Activated CD4-positive, alpha-beta T cell treated with anti-CD3 and anti-CD28 coated beads for 36 hours (primary cell): ENCODE measurements at regions of chr16 and their contacts with region 1.

Region 1: DNA sequence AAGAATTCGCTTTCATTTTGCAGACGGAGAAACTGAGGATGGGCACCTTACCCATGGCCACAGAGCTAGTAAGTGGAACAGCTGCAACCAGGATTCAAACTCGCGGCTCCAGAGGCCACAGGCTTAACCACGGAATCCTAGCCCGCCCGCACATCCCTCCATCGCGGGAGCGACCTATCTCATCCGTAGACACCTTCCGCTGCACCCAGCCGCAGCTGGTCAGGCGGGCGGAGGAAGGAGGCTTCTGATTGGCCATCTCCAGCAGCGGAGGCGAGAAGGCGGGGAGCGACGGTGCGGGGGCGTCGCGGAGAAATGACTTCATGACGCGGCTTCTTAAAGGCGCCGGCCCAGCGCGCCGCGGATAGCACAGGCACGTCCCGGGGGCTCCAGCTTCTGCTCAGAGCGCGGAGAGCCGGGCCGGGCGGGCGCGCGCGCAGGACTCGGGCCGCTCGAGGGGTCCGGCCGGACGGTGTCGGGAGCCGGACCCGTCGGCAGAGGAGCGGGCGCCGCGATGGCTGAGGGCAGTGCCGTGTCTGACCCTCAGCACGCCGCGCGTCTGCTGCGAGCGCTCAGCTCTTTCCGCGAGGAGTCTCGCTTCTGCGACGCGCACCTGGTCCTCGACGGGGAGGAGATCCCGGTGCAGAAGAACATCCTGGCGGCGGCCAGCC is at the start of gene GAN:
- DNase-seq: peak; percentile 97
- ATAC-seq: peak; percentile 91
- H3K4me3 Mint-ChIP-seq: peak within 1 kb of the TSS; percentile 99
- H3K27ac Mint-ChIP-seq: peak within 1 kb of the TSS; percentile 97
- H3K4me1 Mint-ChIP-seq: peaks cover 66% of the 10 kb centered on the region
- H3K27me3 Mint-ChIP-seq: no peaks in the 10 kb centered on the region
- total RNA-seq, gene GAN: 13.4 to 13.8 TPM

Region 2: GRCh38 chr16:80569440-80570105 is 745.2 kb before region 1 on chr16:
- CTCF ChIA-PET with region 1: no interaction called
- POLR2A ChIA-PET with region 1: no interaction called
- intact Hi-C with region 1: loop called in 1 of 2 experiments (anchors 10 kb)
- DNase-seq: peak; percentile 90
- ATAC-seq: peak; percentile 98
- H3K4me3 Mint-ChIP-seq: peak overlapping the region; percentile 5
- H3K27ac Mint-ChIP-seq: peak overlapping the region; percentile 81
- H3K4me1 Mint-ChIP-seq: peaks cover 38% of the 10 kb centered on the region
- H3K27me3 Mint-ChIP-seq: peaks cover 4% of the 10 kb centered on the region

Region 3: DNA sequence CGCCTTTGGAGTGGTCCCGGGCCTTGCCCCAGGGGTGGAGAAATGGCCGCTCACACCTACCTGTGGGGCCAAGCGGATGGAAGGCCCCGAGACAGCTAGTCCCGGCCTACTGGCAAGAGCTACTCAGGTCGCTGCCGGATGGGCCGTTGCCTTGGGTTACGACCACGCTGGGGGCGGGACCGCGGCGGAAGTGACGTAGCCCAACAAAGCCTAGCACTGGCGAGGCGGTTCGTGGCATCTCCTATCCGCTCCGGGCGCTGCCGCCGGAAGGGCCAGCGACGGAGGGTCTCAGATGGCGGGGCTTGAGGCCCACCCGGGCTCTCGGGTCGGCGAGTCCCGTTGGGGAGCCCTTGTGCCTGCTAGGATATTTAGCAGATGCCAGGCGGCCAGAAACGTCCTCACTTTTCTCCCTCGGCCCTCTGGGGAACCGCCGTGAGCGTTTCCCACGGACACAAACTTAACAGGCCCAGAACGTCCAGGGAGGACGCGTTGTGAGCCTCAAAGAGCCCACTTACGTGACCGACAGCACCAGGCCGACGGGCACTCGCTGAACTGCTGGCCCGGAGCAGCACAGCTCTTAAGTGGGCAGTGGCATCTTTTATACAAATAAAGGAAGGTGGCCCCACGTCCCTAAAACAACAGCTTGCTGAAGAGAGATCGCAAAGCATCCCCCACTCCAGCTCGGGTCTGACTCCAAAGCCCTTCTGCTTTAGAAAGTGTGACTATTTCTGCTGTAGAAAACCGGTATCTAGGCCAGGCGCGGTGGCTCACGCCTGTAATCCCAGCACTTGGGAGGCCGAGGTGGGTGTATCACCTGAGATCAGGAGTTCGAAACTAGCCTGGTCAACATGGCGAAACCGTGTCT is 237.4 kb before region 1 on chr16 and contains the start of gene C16orf46:
- CTCF ChIA-PET with region 1: no interaction called
- POLR2A ChIA-PET with region 1: no interaction called
- intact Hi-C with region 1: loop called (anchors 1 kb)
- DNase-seq: peak; percentile 99
- ATAC-seq: peak; percentile 86
- H3K4me3 Mint-ChIP-seq: no peak within 1 kb of the TSS
- H3K27ac Mint-ChIP-seq: peak within 1 kb of the TSS; percentile 84
- H3K4me1 Mint-ChIP-seq: peaks cover 7% of the 10 kb centered on the region
- H3K27me3 Mint-ChIP-seq: no peaks in the 10 kb centered on the region
- total RNA-seq, gene C16orf46: 0.28 to 0.34 TPM

Region 4: GRCh38 chr16:81174654-81175571 is 139.8 kb before region 1 on chr16:
- CTCF ChIA-PET with region 1: no interaction called
- POLR2A ChIA-PET with region 1: no interaction called
- intact Hi-C with region 1: no loop called
- DNase-seq: no peak
- ATAC-seq: no peak
- H3K4me3 Mint-ChIP-seq: no peak overlapping the region
- H3K27ac Mint-ChIP-seq: no peak overlapping the region
- H3K4me1 Mint-ChIP-seq: no peaks in the 10 kb centered on the region
- H3K27me3 Mint-ChIP-seq: peaks cover 7% of the 10 kb centered on the region

Region 5: GRCh38 chr16:81261049-81261648 is 53.6 kb before region 1 on chr16:
- CTCF ChIA-PET with region 1: interaction called, 5 read pairs
- POLR2A ChIA-PET with region 1: no interaction called
- intact Hi-C with region 1: loop called in 1 of 2 experiments (anchors 1 kb)
- DNase-seq: peak; percentile 55
- ATAC-seq: peak; percentile 65
- H3K4me3 Mint-ChIP-seq: no peak overlapping the region
- H3K27ac Mint-ChIP-seq: no peak overlapping the region
- H3K4me1 Mint-ChIP-seq: no peaks in the 10 kb centered on the region
- H3K27me3 Mint-ChIP-seq: peaks cover 5% of the 10 kb centered on the region

Region 6: DNA sequence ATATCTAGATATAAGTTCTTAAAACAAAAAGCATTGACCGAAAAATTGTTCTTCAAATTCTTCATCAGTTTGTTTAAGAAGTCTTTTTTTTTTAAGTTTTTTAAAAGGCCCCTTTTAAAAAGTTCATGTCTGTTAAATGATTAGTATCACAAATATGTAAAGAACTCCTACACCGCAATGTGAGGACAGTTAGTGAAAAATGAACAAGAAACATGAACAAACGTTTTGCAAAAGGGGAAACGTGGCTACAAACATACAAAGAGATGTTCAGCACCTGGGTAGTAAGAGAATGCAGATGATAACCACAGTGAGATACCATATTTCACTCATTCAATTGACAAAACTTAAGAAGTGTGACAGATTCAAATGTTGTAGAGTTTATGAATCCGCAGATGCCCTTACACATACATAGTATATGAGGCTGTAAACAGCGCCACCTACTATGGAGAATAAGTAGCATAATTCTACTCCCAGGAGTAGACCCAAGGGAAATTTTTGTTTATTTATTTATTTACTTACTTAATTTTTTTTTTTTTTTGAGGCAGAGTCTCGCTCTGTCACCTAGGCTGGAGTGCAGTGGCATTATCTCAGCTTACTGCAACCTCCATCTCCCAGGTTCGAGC is 35.4 kb after region 1 on chr16:
- CTCF ChIA-PET with region 1: no interaction called
- POLR2A ChIA-PET with region 1: no interaction called
- intact Hi-C with region 1: loop called in 1 of 2 experiments (anchors 5 kb)
- DNase-seq: no peak
- ATAC-seq: peak; percentile 25
- H3K4me3 Mint-ChIP-seq: no peak overlapping the region
- H3K27ac Mint-ChIP-seq: no peak overlapping the region
- H3K4me1 Mint-ChIP-seq: peaks cover 15% of the 10 kb centered on the region
- H3K27me3 Mint-ChIP-seq: no peaks in the 10 kb centered on the region

Region 7: DNA sequence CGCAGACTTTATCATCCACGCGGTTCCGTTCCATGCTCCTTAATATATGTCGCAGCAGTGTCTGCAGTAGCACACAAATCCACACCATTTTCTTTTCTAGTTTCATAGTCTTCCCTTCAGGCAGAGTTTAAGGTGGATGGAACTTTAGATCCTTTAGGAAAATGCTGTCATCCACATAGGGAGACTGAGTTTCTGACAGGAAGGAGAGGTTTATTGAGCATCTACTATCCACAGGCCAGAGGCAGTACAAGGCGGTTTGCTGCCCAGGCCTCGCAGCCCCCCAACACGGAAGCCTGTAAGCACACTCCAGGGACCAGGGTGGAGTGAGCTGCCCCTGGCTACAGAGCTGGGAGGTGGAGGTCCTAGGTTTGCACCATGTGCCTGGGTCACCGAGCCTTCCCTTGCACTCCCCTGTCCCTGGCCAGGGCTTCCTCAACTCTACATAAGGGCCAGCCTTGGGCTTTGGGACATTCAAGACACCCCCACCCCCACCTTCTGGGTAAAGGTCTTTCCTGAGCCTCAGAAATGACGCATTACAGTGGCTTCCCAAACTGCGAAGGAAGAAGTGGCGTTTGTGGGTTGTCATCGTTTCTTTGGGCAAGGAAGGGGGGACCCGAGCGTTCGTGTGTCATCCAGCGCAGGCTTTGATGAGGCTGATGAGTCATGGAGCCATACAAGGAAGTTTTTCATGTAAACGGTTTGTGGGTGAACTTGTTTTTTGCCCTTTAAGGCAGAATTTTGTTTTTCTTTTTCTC is 317.8 kb after region 1 on chr16:
- CTCF ChIA-PET with region 1: no interaction called
- POLR2A ChIA-PET with region 1: no interaction called
- intact Hi-C with region 1: loop called (anchors 2 to 5 kb)
- DNase-seq: peak; percentile 90
- ATAC-seq: peak; percentile 81
- H3K4me3 Mint-ChIP-seq: peak overlapping the region; percentile 47
- H3K27ac Mint-ChIP-seq: peak overlapping the region; percentile 97
- H3K4me1 Mint-ChIP-seq: peaks cover 67% of the 10 kb centered on the region
- H3K27me3 Mint-ChIP-seq: no peaks in the 10 kb centered on the region

Region 8: DNA sequence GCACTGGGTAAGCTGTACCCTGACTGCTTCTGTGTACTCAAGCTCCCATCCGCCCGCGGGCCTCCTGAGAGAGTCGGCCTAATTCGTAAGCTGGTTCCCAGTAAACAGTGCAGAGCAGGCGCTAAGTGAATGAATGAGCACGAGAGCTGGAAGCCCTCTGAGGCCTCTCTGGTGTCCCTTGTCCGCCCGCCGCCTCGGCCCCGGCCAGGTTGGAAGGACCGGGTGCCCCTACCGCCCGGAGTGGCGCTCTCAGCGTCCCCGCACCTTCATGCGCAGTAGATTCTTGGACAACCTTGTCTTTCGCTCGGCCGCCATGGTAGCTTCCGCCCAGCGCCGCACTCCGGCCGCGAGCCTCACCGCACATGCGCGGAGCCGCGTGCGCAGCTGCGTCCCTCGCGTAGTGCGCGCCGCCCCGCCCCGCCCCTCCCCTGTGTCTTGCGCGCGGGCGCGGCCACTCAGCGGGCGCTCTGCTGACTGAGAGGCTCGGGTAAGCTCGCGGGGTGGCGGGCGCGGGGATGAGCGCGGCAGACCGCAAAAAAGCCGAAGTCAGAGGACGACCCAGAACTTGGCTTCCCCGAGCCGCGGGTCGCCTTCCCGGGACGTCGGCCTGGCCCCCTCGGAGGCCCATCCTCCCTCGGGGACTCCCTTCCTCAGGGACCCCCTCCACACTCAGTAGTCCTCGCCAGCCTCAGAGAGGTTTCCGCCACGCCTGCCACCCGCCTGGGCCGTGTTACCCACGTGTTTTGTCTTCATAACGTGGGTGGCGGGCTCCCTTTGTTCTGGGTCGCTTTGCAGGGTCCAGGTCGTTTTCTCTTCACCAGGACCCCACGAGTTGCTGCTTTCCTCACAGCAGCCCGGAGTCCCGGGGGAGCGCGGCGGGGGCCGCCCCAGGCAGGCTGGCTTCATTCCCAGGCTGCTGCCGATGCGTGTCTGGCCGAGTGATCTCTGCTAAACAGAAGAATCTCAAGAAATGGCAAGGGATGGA is 855.4 kb after region 1 on chr16 and contains the start of gene MPHOSPH6:
- CTCF ChIA-PET with region 1: no interaction called
- POLR2A ChIA-PET with region 1: no interaction called
- intact Hi-C with region 1: loop called in 1 of 2 experiments (anchors 10 kb)
- DNase-seq: peak; percentile 95
- ATAC-seq: peak; percentile 94
- H3K4me3 Mint-ChIP-seq: peak within 1 kb of the TSS; percentile 96
- H3K27ac Mint-ChIP-seq: peak within 1 kb of the TSS; percentile 97
- H3K4me1 Mint-ChIP-seq: peaks cover 31% of the 10 kb centered on the region
- H3K27me3 Mint-ChIP-seq: peaks cover 25% of the 10 kb centered on the region
- total RNA-seq, gene MPHOSPH6: 48.0 to 48.7 TPM